Head of caudate nucleus (tissue), 42 donors: ENCODE measurements at regions of chr2 and their contacts with region 1.

Region 1: DNA sequence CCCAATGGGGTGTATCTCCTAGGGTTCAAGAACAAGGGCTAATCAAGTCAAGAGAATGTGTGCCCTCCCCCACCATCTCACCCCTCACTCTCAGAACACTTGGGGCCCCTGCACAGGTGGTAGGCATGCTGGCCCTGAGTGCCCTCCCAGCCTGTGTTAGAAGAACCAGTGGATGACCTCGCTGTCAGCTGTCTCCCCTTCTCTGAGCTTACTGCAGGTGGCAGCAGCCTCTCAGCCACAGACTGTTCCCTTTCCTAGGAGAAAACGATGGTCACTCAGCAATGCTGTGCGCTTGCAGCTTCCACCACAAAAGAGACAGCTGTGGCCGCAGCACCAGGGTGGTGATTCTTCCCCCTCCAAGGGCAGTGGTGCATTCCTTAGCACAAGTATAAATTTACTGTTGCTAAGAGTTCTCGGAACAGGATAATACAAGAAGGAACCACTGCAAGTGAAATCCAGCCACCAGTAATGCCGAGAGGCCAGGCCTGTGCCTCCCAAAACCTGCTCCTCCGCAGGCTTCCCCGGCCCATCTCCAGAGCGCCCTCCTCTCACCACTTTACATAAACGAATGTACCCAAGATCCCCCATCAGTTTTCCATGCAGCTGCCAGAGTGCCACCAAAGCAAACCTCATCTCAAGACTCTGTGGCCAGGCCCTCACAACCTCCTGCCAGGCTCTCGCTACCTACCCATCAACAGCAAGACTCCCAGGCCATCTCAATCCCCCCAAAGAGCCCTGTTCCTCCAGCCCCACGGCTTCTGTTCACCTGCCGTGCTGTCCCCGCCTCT is 935 bp upstream of the RAMP1 start:
- DNase-seq: peak; percentile 65 to 93 (median 84)

Region 2: GRCh38 chr2:237919593-237919992 is 61.1 kb after region 1 on chr2:
- intact Hi-C with region 1: no loop called
- DNase-seq: peak in 4 of 42 donors; percentile 26 to 54 (median 36)

Region 3: DNA sequence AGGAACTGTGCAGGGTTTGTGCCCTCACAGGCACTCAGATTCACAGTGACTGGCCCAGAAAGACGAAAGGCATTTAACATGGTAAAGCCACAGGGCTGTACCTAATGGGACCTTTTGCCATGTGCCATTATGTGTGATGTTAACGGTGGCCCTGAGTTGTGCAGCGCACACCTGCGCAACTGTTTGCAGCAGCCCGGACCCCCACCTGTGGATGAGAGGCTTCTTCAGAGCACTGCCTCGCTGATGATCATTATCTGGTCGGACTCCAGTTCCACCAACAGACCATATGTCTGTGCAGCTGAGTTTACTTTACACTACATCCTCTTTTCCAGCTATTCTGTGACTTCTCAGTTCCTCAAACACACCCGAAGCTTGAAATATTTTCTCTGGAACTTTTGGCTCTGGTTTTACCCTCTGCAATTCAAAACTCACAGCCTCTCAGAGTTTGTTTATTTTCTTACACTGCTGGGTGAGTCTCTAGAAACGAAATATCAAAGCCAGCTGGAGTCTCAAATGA is 72.8 kb after region 1 on chr2:
- intact Hi-C with region 1: no loop called
- DNase-seq: peak in 1 of 42 donors; percentile 29

Region 4: DNA sequence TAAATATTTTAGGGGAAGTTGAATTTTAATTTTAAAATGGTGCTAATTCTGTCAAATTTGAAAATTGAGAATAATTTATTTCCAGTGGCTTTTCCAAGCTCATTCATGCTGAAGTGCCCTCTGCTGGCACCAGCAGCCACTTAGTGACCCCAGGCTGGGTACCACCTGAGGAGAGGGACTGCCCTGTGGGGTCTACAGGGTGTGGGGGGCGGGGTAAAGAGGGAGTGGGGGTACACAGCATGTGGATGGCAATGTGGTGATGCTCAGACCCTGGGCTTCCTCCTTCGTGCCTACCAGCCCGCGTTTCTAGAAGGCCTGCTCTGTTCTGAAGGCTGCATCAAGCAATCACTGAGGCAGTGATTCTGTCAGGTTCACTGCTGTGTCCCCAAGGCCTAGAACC is 157.2 kb after region 1 on chr2:
- intact Hi-C with region 1: no loop called
- DNase-seq: peak in 7 of 42 donors; percentile 20 to 59 (median 31)

Region 5: DNA sequence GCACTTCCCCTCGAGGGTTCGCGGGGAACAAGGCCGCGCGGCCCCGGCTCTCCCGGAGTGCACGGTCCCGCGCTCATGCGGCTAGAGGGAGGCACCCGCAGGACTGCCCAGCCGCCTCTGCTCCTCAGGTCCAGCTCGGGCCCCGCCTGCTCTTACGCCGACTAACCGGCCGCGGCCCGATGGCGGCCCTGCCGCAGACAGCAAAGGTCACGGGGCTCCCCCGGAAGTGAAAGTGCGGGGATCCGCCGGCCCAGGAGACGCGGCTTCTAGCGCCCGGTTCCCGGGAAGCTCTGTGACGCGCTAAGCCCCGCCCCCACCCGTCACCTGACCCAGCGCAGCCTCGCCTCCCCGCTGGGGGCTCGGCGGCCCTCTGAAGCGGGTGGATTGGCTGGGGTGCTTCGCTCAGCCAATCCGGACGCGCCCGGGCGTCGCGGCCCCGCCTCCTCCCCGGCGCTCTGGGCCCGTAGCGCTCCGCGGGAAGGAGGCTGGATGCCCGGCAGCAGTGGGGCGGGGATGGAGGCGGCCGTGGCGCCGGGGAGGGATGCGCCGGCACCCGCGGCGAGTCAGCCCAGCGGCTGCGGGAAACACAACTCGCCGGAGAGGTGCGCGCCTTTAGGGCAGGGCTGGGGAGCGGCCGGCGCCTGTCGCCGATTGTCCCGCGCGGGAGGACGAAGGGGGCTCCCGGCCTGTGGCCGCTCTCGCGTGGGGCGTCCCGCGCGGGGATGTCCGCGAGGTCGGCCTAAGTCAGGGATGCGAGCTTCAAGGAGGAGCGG is 202.2 kb after region 1 on chr2 and contains the start of gene SCLY:
- intact Hi-C with region 1: loop called (anchors 5 kb)
- DNase-seq: peak; percentile 96 to 100 (median 99)

Region 6: DNA sequence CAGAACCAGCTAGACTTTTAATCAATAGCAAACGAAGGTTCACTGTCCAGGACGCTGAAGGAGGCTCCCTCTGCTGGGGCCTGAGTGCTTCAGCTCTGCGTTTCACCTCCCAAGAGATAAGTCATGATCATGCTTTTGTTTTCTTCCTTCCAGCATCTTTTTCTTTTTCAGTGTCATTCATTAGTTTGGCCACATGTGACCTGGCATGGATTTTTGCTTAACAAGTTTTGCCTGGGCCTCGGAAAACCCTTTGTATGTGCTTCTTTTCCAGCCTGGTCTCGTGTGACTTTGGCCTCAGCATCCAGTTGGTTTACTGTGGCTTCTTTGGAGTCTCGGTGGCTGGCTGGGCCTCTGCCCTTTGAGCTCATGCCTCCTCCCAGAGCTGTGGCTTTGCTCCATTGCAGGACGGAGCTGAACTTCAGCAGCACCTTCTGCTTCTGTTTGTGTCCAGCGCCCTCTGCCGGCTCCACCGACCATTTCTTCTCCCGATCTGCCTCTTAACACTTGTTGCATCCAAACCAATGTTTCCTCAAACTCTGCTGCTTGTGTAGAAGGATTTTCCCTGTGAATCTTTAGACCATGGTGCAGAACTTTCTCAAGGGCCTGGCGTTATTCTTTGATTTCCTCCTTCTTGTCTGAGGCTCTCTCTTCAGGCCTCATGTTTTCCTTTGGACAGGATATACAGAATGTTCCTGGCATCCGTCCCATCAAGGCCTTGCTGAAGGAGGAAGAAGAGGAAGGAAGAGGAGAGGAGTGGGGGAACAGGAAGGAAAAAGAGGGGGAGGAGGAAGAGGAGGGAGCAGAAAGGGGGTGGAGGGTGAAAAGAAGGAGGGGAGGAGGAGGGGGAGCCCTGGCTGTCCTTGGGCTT is 404.9 kb after region 1 on chr2:
- intact Hi-C with region 1: loop called (anchors 5 kb)
- DNase-seq: peak; percentile 84 to 98 (median 95)